ENCODE measurements at regions of chr12 and their contacts with region 1.

Region 1: DNA sequence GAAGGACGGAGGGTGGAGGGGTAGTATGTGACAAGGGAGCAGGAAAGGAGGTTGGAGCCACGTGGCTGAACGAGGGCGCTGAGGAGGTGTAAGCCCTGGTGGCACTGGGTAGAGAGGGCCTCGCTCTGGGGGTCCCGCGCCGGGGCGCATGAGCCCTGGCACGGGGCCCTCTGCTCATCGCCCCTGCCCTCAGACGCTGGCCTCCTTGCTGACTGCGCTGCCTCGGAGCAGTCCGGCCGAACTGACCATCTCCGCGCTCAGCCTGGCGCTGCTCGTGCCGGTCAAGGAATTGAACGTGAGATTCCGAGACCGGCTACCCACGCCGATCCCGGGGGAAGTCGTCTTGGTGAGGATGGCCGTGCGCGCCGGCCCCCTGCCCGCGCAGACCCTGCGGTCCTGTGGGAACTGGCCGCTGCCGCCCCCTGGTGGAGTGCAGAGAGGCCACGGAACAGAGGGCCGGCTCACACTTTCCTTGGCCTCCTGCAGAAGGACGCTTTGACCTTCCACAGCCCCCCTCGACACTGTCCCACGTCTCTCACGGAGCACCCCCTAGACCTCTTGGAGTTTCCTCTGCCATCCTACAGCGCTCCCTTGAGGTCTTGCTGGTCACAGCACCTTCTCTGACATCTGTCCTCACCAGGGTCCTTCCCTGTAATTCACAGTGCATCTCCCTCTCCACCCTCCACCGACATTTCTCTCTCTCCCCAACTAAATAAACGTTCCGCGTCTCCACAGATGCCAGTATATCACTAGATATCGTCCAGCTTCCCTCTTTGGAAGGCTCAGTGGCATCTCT is 10.5 kb downstream of the ARHGEF25 start:
- DNase-seq: peak; percentile 74
- ATAC-seq: peak; percentile 81
- H3K4me3 Mint-ChIP-seq: peak overlapping the region; percentile 64
- H3K27ac Mint-ChIP-seq: no peak overlapping the region
- H3K4me1 Mint-ChIP-seq: peaks cover 17% of the 10 kb centered on the region
- H3K27me3 Mint-ChIP-seq: peaks cover 85% of the 10 kb centered on the region
- CTCF ChIP-seq: peak; percentile 99

Region 2: GRCh38 chr12:57491393-57492280 is 130.1 kb before region 1 on chr12:
- CTCF ChIA-PET with region 1: no interaction called
- POLR2A ChIA-PET with region 1: no interaction called
- intact Hi-C with region 1: no loop called
- DNase-seq: no peak
- ATAC-seq: no peak
- H3K4me3 Mint-ChIP-seq: no peak overlapping the region
- H3K27ac Mint-ChIP-seq: peak overlapping the region; percentile 66
- H3K4me1 Mint-ChIP-seq: peaks cover 27% of the 10 kb centered on the region
- H3K27me3 Mint-ChIP-seq: no peaks in the 10 kb centered on the region
- CTCF ChIP-seq: peak; percentile 28

Region 3: DNA sequence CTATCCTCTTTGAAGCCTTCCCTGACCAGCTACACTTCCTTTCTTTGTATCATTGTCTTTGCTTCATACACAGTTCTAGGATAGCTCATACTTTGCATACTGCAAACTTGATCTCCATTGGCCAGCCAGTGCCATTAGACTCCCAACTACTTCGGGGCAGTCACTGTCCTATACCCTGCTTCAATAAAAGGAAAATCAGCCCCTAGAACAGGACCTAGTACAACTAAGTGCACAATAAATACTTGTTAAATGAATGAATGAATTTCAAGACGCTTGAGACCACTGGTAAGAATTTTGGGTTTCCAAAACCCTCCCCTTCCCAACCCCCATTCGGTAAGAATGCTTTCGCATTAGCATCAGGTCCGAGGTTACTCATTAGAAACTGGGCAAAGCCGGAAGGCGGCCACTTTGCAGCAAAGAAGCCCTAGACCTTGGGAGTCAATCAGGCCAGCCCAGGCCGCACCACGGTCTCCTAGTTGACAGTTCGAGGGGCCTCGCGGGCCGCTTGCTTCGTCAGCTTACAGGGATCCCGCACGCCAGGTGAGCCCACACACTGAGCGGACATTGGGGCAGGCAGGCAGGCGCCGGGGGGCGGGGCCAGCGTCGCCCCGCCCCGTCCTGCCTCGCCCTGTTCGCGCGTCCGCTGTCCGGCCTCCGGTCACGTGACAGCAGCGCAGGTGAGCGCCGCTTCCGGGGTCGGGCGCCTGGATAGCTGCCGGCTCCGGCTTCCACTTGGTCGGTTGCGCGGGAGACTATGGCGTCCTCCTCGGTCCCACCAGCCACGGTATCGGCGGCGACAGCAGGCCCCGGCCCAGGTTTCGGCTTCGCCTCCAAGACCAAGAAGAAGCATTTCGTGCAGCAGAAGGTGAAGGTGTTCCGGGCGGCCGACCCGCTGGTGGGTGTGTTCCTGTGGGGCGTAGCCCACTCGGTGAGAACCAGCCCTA is 30.9 kb before region 1 on chr12 and contains the start of gene PIP4K2C:
- CTCF ChIA-PET with region 1: interaction called, 124 read pairs
- POLR2A ChIA-PET with region 1: interaction called, 21 read pairs
- intact Hi-C with region 1: loop called (anchors 1 kb)
- DNase-seq: peak; percentile 85
- ATAC-seq: peak; percentile 97
- H3K4me3 Mint-ChIP-seq: peak within 1 kb of the TSS; percentile 79
- H3K27ac Mint-ChIP-seq: peak within 1 kb of the TSS; percentile 77
- H3K4me1 Mint-ChIP-seq: peaks cover 24% of the 10 kb centered on the region
- H3K27me3 Mint-ChIP-seq: no peaks in the 10 kb centered on the region
- CTCF ChIP-seq: no peak
- total RNA-seq, gene PIP4K2C: 10.7 to 12.3 TPM

Region 4: DNA sequence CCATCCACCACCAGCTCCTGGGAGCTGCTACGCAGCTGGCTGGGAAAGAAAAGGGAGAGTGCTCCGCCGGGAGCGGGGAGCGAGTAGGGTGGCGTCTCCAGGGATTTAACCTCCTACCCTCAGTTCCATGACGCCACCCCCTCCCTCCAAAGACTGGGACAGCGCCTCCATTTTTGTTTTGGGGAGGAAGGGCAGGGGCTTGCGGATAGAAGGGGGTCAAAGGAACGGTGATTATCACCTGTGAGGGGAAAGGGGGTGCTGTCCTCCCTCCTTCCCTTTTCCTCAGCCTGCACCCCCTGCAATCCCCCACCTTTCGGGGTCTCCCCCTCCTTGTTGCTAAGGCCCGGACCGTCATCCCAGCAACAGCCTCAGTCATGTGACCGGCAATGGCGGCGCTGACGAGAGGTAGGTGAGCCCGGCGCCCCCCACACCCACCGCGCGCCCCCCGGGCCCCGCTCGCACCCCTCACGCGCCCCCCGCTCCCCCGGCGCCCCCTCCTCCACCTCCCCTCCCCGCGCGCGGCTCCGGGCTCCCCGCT is 17.2 kb before region 1 on chr12 and contains the start of gene DTX3:
- CTCF ChIA-PET with region 1: interaction called, 12 read pairs
- POLR2A ChIA-PET with region 1: interaction called, 27 read pairs
- intact Hi-C with region 1: no loop called
- DNase-seq: peak; percentile 66
- ATAC-seq: peak; percentile 62
- H3K4me3 Mint-ChIP-seq: peak within 1 kb of the TSS; percentile 74
- H3K27ac Mint-ChIP-seq: peak within 1 kb of the TSS; percentile 81
- H3K4me1 Mint-ChIP-seq: peaks cover 25% of the 10 kb centered on the region
- H3K27me3 Mint-ChIP-seq: no peaks in the 10 kb centered on the region
- CTCF ChIP-seq: no peak
- total RNA-seq, gene DTX3: 13.7 to 15.1 TPM

Region 5: GRCh38 chr12:57611108-57611809 is 10.4 kb before region 1 on chr12 and contains the start of gene ARHGEF25:
- CTCF ChIA-PET with region 1: interaction called, 16 read pairs
- POLR2A ChIA-PET with region 1: interaction called, 27 read pairs
- intact Hi-C with region 1: no loop called
- DNase-seq: peak; percentile 59
- ATAC-seq: peak; percentile 83
- H3K4me3 Mint-ChIP-seq: peak within 1 kb of the TSS; percentile 70
- H3K27ac Mint-ChIP-seq: no peak within 1 kb of the TSS
- H3K4me1 Mint-ChIP-seq: peaks cover 9% of the 10 kb centered on the region
- H3K27me3 Mint-ChIP-seq: peaks cover 12% of the 10 kb centered on the region
- CTCF ChIP-seq: no peak
- total RNA-seq, gene ARHGEF25: 1.1 to 1.2 TPM

Region 6: DNA sequence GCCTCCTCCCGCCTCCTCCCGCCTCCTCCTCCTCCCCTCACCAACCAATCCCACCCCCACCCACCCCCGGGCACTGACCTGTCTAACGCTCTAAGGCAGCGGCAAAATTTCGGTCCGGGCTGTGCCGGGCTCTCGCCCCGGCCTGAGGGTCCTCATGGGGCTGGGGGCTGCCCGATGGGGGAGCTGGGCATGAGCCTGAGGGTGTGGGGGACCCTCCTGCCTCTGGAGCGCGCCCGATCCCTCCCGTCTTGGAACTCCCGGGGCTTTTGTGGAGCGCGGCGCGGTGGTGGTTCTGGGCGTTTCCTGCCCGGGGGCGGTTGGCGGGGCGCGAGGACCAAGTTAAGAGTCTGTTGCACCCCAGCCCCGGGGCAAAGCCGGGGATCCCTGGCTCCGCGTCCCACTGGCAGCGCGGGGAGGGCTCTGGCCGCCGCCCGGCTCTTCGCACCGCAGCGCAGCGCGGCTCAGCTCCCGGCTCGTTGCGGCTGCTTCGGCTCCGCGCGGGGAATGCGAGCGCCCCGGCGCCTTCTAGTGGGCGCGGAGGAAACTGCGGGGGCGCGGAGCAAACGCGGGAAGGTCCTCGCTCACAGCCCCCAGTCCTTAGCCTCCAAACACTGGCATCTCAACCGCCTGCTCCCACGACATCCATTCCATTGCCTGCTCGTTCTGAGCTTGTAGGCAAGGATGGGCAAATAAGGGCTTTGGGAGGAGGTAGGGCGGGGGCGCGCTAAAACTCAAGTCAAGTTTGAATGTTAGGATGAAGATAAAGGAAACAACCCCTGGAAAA is 11.2 kb after region 1 on chr12 and contains the start of gene B4GALNT1:
- CTCF ChIA-PET with region 1: interaction called, 28 read pairs
- POLR2A ChIA-PET with region 1: no interaction called
- intact Hi-C with region 1: no loop called
- DNase-seq: peak; percentile 58
- ATAC-seq: peak; percentile 80
- H3K4me3 Mint-ChIP-seq: peak within 1 kb of the TSS; percentile 48
- H3K27ac Mint-ChIP-seq: no peak within 1 kb of the TSS
- H3K4me1 Mint-ChIP-seq: peaks cover 13% of the 10 kb centered on the region
- H3K27me3 Mint-ChIP-seq: peaks cover 56% of the 10 kb centered on the region
- CTCF ChIP-seq: peak; percentile 81
- total RNA-seq, gene B4GALNT1: 0.61 to 1.4 TPM

Measured in activated CD8-positive, alpha-beta T cell treated with anti-CD3 and anti-CD28 coated beads for 36 hours (primary cell).